A673 (cell line): ENCODE measurements at regions of chr18 and their contacts with region 1.

Region 1: GRCh38 chr18:32552421-32553030 is 81.8 kb upstream of the GAREM1 start:
- DNase-seq: peak; percentile 79
- H3K4me3 ChIP-seq: no peak overlapping the region
- H3K27ac ChIP-seq: no peak overlapping the region
- H3K4me1 ChIP-seq: no peaks in the 10 kb centered on the region
- H3K27me3 ChIP-seq: no peaks in the 10 kb centered on the region
- CTCF ChIP-seq: peak; percentile 79

Region 2: GRCh38 chr18:32158108-32158624 is 394.4 kb before region 1 on chr18:
- CTCF ChIA-PET with region 1: interaction called, 18 read pairs
- POLR2A ChIA-PET with region 1: no interaction called
- intact Hi-C with region 1: loop called (anchors 1 kb)
- DNase-seq: peak; percentile 94
- H3K4me3 ChIP-seq: peak overlapping the region; percentile 29
- H3K27ac ChIP-seq: no peak overlapping the region
- H3K4me1 ChIP-seq: peaks cover 7% of the 10 kb centered on the region
- H3K27me3 ChIP-seq: no peaks in the 10 kb centered on the region
- CTCF ChIP-seq: peak; percentile 92

Region 3: DNA sequence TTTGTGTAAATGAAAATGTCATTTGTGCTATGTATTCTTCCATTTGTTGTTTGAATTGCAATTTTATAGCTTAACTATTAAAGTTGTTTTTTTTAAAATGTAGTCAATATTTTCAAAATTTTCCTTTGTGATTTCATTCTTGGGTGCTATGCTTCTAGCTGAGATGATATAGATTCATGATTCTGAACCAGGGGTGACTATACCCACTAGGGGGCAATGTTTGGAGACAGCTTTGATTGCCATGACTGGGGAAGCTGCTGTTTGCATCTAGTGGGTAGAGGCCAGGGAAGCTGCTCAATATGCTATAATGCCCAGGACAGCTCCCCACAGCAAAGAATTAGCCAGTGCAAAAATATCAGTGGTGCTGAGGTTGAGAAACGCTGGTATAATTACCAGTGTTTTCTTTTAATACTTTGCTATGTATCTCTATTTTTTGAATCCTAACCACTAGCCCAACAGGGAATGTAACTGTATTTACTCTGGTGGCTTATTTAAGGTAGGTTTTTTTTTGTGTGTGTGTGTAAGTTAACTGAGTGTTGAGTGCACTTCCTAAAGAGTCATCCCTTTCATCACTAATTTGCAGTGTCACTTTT is 262.9 kb before region 1 on chr18:
- CTCF ChIA-PET with region 1: interaction called, 6 read pairs
- POLR2A ChIA-PET with region 1: no interaction called
- intact Hi-C with region 1: loop called (anchors 5 kb)
- DNase-seq: peak; percentile 85
- H3K4me3 ChIP-seq: no peak overlapping the region
- H3K27ac ChIP-seq: no peak overlapping the region
- H3K4me1 ChIP-seq: no peaks in the 10 kb centered on the region
- H3K27me3 ChIP-seq: no peaks in the 10 kb centered on the region
- CTCF ChIP-seq: peak; percentile 86

Region 4: GRCh38 chr18:33459612-33460011 is 907.1 kb after region 1 on chr18:
- CTCF ChIA-PET with region 1: no interaction called
- POLR2A ChIA-PET with region 1: no interaction called
- intact Hi-C with region 1: no loop called
- DNase-seq: no peak
- H3K4me3 ChIP-seq: no peak overlapping the region
- H3K27ac ChIP-seq: no peak overlapping the region
- H3K4me1 ChIP-seq: no peaks in the 10 kb centered on the region
- H3K27me3 ChIP-seq: no peaks in the 10 kb centered on the region
- CTCF ChIP-seq: no peak